A549 (cell line): ENCODE measurements at regions of chr18 and their contacts with region 1.

Region 1: DNA sequence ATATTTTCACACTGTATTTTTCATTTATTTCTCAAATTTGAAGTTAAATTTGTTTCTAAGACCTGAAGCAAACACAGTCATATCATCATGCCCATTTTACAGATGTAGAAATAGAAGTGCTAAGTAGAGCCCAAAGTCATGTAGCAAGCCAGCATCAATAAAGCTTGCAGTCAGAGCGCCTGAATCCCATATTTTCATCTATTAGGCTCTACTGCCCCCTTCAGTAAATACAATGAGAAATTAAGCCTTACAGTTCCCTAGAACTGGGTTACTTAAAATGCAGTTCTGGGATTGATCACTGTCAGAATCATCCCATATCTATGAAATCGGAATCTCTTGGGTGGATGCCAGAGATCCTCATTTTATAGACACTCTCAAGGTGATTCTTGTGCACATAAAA is 419.9 kb downstream of the TGIF1 start:
- DNase-seq: peak; percentile 19 to 77
- ATAC-seq: peak; percentile 71 to 82; a peak in 4 of 6 replicates
- H3K4me3 ChIP-seq: no peak overlapping the region
- H3K27ac ChIP-seq: peak overlapping the region; percentile 11 to 76; a peak in 3 of 6 replicates
- H3K4me1 ChIP-seq: peaks cover 11% of the 10 kb centered on the region; the same call in 2 of the 3 replicates
- CTCF ChIP-seq: peak; percentile 52
- EP300 ChIP-seq: no peak
- POLR2A ChIP-seq: no peak
- RAD21 ChIP-seq: peak; percentile 78 to 80

Region 2: GRCh38 chr18:3794537-3795348 is 75.1 kb before region 1 on chr18:
- CTCF ChIA-PET with region 1: no interaction called
- POLR2A ChIA-PET with region 1: no interaction called
- DNase-seq: peak in 1 of 2 experiments; percentile 66
- ATAC-seq: peak; percentile 67 to 71
- H3K4me3 ChIP-seq: no peak overlapping the region
- H3K27ac ChIP-seq: peak overlapping the region; percentile 68 to 83
- H3K4me1 ChIP-seq: peaks cover 14% of the 10 kb centered on the region; the same call in 1 of the 3 replicates
- CTCF ChIP-seq: no peak
- EP300 ChIP-seq: peak in 1 of 2 experiments; percentile 77; a peak in 1 of 5 replicates
- POLR2A ChIP-seq: no peak
- RAD21 ChIP-seq: no peak

Region 3: DNA sequence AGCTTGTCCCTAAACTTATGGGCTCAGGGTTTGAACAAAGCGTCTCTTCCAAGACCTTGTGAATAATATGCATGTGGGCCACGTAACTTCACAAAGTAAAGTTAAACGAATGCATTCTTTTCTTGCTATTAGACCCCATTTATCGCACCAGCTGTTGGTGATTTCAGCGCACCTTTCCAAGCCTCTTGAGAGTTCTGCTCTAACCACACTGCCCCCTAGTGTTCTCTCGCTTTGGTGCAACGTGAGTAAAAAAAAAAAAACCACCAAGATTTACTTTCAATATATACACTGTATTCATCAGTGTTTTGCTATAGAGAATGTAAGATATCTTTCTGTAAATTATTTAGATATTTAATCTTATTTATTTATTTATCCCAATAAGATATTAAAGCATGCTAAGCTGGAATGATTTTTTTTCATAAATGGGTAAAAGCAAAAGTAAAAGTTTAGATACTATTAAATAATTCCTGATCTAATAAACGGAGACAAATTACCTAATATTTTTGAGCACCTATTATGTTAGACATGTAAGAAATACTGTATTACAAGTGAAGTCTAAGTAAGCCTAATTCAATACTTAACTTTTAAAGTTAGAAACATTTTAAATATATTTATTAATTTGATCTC is 125.7 kb after region 1 on chr18:
- CTCF ChIA-PET with region 1: interaction called, 22 read pairs
- POLR2A ChIA-PET with region 1: no interaction called
- DNase-seq: peak in 1 of 2 experiments; percentile 79
- ATAC-seq: peak; percentile 19 to 53; a peak in 3 of 6 replicates
- H3K4me3 ChIP-seq: no peak overlapping the region
- H3K27ac ChIP-seq: peak overlapping the region; percentile 49 to 83
- H3K4me1 ChIP-seq: peaks cover 19% of the 10 kb centered on the region
- CTCF ChIP-seq: peak; percentile 77
- EP300 ChIP-seq: no peak
- POLR2A ChIP-seq: no peak
- RAD21 ChIP-seq: peak; percentile 74 to 75

Region 4: GRCh38 chr18:4293337-4293736 is 423.5 kb after region 1 on chr18:
- CTCF ChIA-PET with region 1: no interaction called
- POLR2A ChIA-PET with region 1: no interaction called
- DNase-seq: no peak
- ATAC-seq: no peak
- H3K4me3 ChIP-seq: no peak overlapping the region
- H3K27ac ChIP-seq: no peak overlapping the region
- H3K4me1 ChIP-seq: no peaks in the 10 kb centered on the region
- CTCF ChIP-seq: no peak
- EP300 ChIP-seq: no peak
- POLR2A ChIP-seq: no peak
- RAD21 ChIP-seq: no peak